ENCODE measurements at regions of chr11 and their contacts with region 1.

Region 1: DNA sequence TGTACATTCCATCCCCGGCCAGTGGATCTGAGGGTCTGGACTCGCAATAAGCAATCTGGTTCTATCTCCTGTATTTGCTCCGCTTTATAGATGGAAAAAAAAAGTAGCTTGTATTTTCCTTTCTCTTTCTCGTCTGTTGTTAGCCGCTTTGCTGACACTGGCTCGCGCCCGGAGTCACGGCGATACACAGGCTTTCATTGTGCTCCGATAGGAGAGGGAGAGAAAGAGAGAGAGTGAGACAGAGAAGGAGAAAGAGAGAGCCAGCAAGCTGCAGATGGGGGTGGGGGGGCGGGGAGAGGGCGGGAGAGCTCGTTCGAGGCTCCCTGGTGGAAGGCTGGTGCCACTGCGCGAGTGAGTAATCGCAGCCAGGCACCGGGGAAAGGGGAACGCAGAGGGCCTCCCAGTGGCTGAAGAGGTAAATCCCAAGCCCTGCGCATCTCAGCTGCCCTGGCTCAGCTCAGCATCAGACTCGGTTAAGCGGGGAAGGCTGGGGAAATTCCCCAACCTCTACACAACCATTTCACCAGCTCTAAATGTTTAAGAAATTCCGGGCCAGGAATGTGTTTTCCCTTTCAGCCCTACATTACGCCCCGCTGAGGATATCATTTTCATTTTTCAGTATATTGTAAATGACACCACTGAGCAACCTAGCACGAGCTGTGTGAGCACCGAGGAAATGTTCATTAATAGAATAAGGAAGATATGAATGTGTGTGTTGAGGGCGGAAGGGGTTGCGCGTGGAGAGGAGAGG is at the start of gene MAML2:
- DNase-seq: peak; percentile 83
- H3K4me3 Mint-ChIP-seq: peak within 1 kb of the TSS; percentile 97
- H3K27ac Mint-ChIP-seq: peak within 1 kb of the TSS; percentile 92
- H3K4me1 Mint-ChIP-seq: peaks cover 31% of the 10 kb centered on the region
- H3K27me3 Mint-ChIP-seq: no peaks in the 10 kb centered on the region
- total RNA-seq, gene MAML2: 10.5 and 11.8 TPM in 2 replicates

Region 2: GRCh38 chr11:96012086-96012824 is 330.9 kb before region 1 on chr11:
- intact Hi-C with region 1: loop called (anchors 1 kb)
- DNase-seq: peak; percentile 34
- H3K4me3 Mint-ChIP-seq: peak overlapping the region; percentile 21
- H3K27ac Mint-ChIP-seq: peak overlapping the region; percentile 71
- H3K4me1 Mint-ChIP-seq: peaks cover 49% of the 10 kb centered on the region
- H3K27me3 Mint-ChIP-seq: no peaks in the 10 kb centered on the region

Region 3: DNA sequence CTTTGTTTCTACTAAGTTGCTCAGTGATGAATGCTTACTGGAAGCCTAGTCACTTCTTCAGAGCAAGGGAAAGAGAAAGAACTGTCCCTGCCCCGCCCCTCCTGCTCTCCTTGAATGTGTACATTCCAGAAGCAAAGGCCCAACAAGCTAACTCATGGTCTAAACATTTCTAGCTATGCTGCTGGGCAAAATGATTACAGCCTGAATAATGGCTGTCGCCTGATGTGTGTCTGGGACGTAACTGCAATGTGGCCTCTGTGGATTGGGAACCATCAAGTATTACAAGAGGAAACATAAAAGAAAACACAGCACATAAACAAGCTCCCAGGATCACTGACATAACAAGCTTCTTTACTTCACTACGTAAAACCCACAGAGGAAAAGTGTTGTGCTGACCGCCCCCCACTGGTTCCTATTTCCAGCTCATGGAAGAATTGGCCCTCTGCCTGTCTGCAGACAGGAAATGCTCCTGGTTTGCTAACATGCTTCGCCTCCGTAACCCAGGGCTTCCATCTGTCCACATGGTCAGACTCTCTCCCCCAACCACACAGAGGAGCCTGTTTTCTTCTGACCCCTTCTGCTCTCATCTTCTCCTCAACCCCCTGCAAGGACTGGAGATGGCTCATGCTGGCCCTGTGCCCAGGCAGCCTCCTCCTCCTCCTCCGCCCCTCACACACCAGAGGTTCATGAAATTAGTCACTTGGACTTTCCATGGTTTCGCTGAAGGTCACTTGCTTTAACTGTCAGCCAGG is 187.3 kb before region 1 on chr11:
- intact Hi-C with region 1: loop called (anchors 1 kb)
- DNase-seq: peak; percentile 25
- H3K4me3 Mint-ChIP-seq: peak overlapping the region; percentile 43
- H3K27ac Mint-ChIP-seq: peak overlapping the region; percentile 96
- H3K4me1 Mint-ChIP-seq: peaks cover 49% of the 10 kb centered on the region
- H3K27me3 Mint-ChIP-seq: no peaks in the 10 kb centered on the region

Region 4: DNA sequence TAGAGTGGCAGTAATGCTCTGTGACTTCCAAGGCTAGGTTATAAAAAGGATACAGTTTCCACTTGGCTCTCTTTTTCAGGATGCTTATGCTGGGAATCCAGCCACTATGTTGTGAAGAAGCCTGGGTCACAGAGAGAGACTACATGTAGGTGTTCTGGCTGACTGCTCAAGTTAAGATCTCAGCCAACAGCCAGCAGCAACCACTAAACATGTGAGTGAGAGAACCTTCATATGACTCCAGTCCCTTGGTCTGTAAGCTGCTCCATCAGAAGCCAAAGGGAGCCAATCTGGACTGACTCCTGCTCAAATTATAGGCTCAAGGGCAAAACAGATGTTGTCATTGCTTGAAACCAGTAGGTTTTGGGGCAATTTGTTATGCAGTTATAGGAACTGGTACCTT is 162.8 kb before region 1 on chr11:
- intact Hi-C with region 1: no loop called
- DNase-seq: no peak
- H3K4me3 Mint-ChIP-seq: no peak overlapping the region
- H3K27ac Mint-ChIP-seq: no peak overlapping the region
- H3K4me1 Mint-ChIP-seq: peaks cover 20% of the 10 kb centered on the region
- H3K27me3 Mint-ChIP-seq: no peaks in the 10 kb centered on the region

Region 5: GRCh38 chr11:96235751-96236150 is 107.4 kb before region 1 on chr11:
- intact Hi-C with region 1: loop called (anchors 1 kb)
- DNase-seq: peak; percentile 52
- H3K4me3 Mint-ChIP-seq: peak overlapping the region; percentile 65
- H3K27ac Mint-ChIP-seq: peak overlapping the region; percentile 89
- H3K4me1 Mint-ChIP-seq: peaks cover 36% of the 10 kb centered on the region
- H3K27me3 Mint-ChIP-seq: no peaks in the 10 kb centered on the region

Region 6: DNA sequence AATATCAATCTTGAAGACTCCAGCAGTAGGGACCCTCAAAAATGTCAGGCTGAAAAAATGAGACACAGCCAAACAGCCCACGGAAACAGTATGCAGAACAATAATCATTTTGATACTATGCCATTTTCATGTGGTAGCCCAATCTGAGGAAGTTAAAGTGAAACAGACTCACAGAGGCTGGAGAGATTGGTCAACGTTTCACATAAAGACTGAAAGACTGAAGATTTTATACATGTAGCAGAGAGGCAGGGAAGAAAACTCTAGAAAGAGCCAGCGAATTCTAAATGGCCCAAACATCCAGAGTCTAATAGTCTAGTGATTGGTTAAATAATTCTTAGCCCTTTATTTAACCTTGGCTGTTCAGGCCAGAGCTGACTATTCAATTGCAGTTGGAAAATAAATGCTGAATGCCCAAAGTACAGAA is 49.5 kb before region 1 on chr11:
- intact Hi-C with region 1: loop called (anchors 1 kb)
- DNase-seq: no peak
- H3K4me3 Mint-ChIP-seq: peak overlapping the region; percentile 19
- H3K27ac Mint-ChIP-seq: peak overlapping the region; percentile 73
- H3K4me1 Mint-ChIP-seq: peaks cover 47% of the 10 kb centered on the region
- H3K27me3 Mint-ChIP-seq: no peaks in the 10 kb centered on the region

Region 7: GRCh38 chr11:97158243-97158642 is 815.1 kb after region 1 on chr11:
- intact Hi-C with region 1: no loop called
- DNase-seq: no peak
- H3K4me3 Mint-ChIP-seq: no peak overlapping the region
- H3K27ac Mint-ChIP-seq: no peak overlapping the region
- H3K4me1 Mint-ChIP-seq: no peaks in the 10 kb centered on the region
- H3K27me3 Mint-ChIP-seq: no peaks in the 10 kb centered on the region

Measured in activated T-helper 2 cell treated with anti-CD3 and anti-CD28 coated beads, Interferon-gamma antibody, Interleukin-2, Interleukin-4, amounts not matched to agents 10 μg/mL and 5 μg/mL and 100 μg/mL, durations not matched to agents 14 hours and 24 hours and 36 hours (primary cell).